ENCODE measurements at regions of chr3 and their contacts with region 1.

Region 1: DNA sequence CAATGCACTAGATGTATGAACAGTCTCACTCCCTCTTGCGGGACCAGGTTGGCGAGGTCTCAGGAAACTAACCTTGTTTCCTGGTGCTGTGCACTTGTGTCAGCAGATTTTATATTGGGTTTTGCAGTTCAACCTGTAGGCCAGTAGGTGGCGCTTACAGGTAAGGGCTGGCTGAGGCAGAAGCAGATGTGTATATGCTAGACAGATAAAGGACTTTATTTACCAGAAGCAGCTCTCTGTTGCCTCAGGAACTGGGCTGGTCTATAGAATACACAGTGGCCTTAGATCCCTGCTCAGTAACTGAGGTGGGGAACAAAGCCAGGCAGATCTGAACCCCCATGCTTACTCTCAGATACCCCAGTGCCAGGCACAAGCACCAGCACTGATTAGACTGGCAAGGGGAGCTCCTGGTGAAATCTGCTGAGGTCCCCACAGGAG is 296.8 kb downstream of the DOCK3 start:
- DNase-seq: peak in 34 of 35 experiments; percentile 23 to 80 (median 53)
- ATAC-seq: peak; percentile 88 to 94 (median 90)
- H3K4me3 ChIP-seq: no peak overlapping the region
- H3K4me3 Mint-ChIP-seq: no peak overlapping the region
- H3K27ac ChIP-seq: peak overlapping the region; percentile 50
- H3K27ac Mint-ChIP-seq: peak overlapping the region; percentile 80 to 87
- H3K4me1 ChIP-seq: peaks cover 0 to 13% of the 10 kb centered on the region in 2 experiments
- H3K4me1 Mint-ChIP-seq: peaks cover 11 to 18% (median 16%) of the 10 kb centered on the region in 3 donors
- H3K27me3 ChIP-seq: no peaks in the 10 kb centered on the region
- H3K27me3 Mint-ChIP-seq: no peaks in the 10 kb centered on the region

Region 2: GRCh38 chr3:50337191-50337841 is 634.2 kb before region 1 on chr3:
- CTCF ChIA-PET with region 1: no interaction called
- POLR2A ChIA-PET with region 1: no interaction called
- DNase-seq: peak; percentile 80 to 97 (median 90)
- ATAC-seq: peak; percentile 77 to 84 (median 80)
- H3K4me3 ChIP-seq: peak overlapping the region; percentile 68 to 84
- H3K4me3 Mint-ChIP-seq: peak overlapping the region; percentile 86 to 90 (median 88)
- H3K27ac ChIP-seq: peak overlapping the region; percentile 97
- H3K27ac Mint-ChIP-seq: peak overlapping the region; percentile 93 to 95
- H3K4me1 ChIP-seq: peaks cover 32 to 95% of the 10 kb centered on the region in 2 experiments
- H3K4me1 Mint-ChIP-seq: peaks cover 63 to 71% (median 71%) of the 10 kb centered on the region in 3 donors
- H3K27me3 ChIP-seq: no peaks in the 10 kb centered on the region
- H3K27me3 Mint-ChIP-seq: no peaks in the 10 kb centered on the region

Region 3: DNA sequence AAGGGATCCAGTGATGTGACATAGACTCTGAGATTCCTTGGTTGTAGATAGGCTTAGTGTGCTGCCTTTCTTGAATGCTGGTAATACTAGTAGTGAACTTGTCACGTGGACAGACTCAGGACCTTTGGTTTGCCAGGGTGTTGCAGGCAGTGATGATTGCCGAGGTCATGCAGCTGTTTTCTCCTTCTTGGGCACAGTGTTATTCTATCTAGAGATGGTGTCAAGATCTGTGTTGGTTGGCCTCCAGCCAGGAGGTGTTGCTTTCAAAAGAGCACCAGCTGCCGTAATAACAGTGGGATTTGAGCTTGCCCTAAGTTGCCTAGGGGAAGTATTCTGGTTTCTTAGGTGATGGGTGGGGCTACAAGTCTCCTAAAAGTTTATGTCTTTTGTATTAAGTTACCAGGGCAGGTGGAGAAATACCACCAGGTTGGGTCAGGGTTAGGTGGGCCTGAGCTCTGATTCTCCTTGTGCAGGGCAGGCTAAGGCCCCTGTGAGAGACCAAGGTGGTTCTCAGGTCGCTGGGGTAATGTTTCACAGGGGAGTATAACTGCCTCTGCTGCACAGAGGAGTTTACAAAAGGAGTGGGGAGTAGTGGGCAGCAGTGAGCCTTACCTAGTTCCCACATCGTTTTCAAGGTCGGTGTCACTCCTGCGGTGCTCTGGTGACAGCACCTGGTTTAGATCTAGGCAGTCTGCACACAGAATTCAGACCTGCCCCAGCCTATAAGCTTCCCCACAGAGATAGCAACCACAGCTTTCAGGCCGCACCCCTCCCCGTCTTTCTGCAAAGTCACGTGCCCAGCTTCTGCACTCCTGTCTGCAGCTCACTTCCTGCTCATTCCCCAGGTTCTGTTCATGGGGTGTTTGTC is 53.5 kb after region 1 on chr3:
- CTCF ChIA-PET with region 1: interaction called, 5 to 16 read pairs
- POLR2A ChIA-PET with region 1: interaction called in 1 of 2 experiments, 5 read pairs
- DNase-seq: peak; percentile 56 to 88 (median 79)
- ATAC-seq: peak; percentile 94 to 96 (median 95)
- H3K4me3 ChIP-seq: peak overlapping the region in 1 of 2 donors; percentile 26
- H3K4me3 Mint-ChIP-seq: peak overlapping the region; percentile 53 to 70 (median 69)
- H3K27ac ChIP-seq: peak overlapping the region; percentile 84
- H3K27ac Mint-ChIP-seq: peak overlapping the region; percentile 94 to 98
- H3K4me1 ChIP-seq: peaks cover 14 to 28% of the 10 kb centered on the region in 2 experiments
- H3K4me1 Mint-ChIP-seq: peaks cover 47 to 59% (median 55%) of the 10 kb centered on the region in 3 donors
- H3K27me3 ChIP-seq: peaks cover 0 to 4% of the 10 kb centered on the region in 2 experiments
- H3K27me3 Mint-ChIP-seq: no peaks in the 10 kb centered on the region

Region 4: DNA sequence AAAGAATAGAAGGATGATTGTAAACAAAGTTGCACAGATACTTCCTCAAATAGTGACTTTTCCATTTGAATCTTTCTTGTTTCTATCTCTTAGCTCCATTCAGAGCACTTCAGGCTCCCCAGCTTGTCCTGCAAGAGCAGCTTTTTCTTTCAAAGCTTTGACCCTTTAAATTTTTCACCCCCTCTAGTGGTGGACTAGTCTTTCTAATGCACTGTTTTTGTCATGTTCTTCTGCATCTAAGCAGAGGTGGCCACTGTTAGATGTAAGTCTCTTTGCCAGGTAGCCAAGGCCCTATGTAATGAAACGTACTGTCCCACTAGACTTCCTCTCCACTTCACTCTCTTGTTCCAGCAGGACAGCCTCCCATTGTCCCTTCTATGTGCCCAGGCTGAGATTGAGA is 339.5 kb after region 1 on chr3:
- CTCF ChIA-PET with region 1: interaction called in 1 of 2 experiments, 29 read pairs
- POLR2A ChIA-PET with region 1: no interaction called
- DNase-seq: peak in 1 of 35 experiments; percentile 55
- ATAC-seq: peak in 1 of 4 experiments; percentile 35
- H3K4me3 ChIP-seq: no peak overlapping the region
- H3K4me3 Mint-ChIP-seq: no peak overlapping the region
- H3K27ac ChIP-seq: no peak overlapping the region
- H3K27ac Mint-ChIP-seq: no peak overlapping the region
- H3K4me1 ChIP-seq: no peaks in the 10 kb centered on the region
- H3K4me1 Mint-ChIP-seq: no peaks in the 10 kb centered on the region
- H3K27me3 ChIP-seq: no peaks in the 10 kb centered on the region
- H3K27me3 Mint-ChIP-seq: no peaks in the 10 kb centered on the region

Region 5: GRCh38 chr3:51371943-51372557 is 400.5 kb after region 1 on chr3:
- CTCF ChIA-PET with region 1: interaction called, 3 to 17 read pairs
- POLR2A ChIA-PET with region 1: no interaction called
- DNase-seq: peak in 24 of 35 experiments; percentile 10 to 75 (median 42)
- ATAC-seq: peak in 3 of 4 experiments; percentile 37 to 68 (median 56)
- H3K4me3 ChIP-seq: no peak overlapping the region
- H3K4me3 Mint-ChIP-seq: no peak overlapping the region
- H3K27ac ChIP-seq: no peak overlapping the region
- H3K27ac Mint-ChIP-seq: no peak overlapping the region
- H3K4me1 ChIP-seq: peaks cover 0 to 3% of the 10 kb centered on the region in 2 experiments
- H3K4me1 Mint-ChIP-seq: peaks cover 2 to 7% (median 3%) of the 10 kb centered on the region in 3 donors
- H3K27me3 ChIP-seq: peaks cover 0 to 10% of the 10 kb centered on the region in 2 experiments
- H3K27me3 Mint-ChIP-seq: peaks cover 3 to 5% of the 10 kb centered on the region in 2 donors

Measured in T-cell (primary cell).